Caco-2 (cell line): ENCODE measurements at regions of chrX and their contacts with region 1.

Region 1: DNA sequence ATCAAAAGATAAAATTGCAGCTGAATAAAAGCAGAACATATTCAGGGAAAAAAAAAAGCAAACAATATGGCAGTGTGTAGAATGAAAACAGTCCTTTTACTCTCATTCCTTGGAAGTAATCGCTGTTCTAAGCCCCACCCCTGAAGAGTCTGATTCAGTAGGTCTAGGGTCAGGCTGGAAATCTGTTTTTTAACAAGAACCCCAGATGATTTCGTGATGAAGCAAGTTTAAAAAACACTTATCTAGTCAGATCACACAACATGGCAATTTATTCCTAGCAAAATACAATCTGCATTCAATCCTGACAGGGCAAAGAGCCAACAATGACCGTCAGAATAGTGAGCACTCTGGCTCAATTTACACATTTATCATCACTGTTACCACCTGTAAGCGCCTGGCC is 16.1 kb downstream of the FAM120C start:
- DNase-seq: no peak
- H3K4me3 ChIP-seq: no peak overlapping the region
- H3K4me3 Mint-ChIP-seq: no peak overlapping the region
- H3K27ac Mint-ChIP-seq: no peak overlapping the region
- H3K4me1 ChIP-seq: no peaks in the 10 kb centered on the region
- H3K4me1 Mint-ChIP-seq: no peaks in the 10 kb centered on the region
- H3K27me3 ChIP-seq: no peaks in the 10 kb centered on the region
- H3K27me3 Mint-ChIP-seq: no peaks in the 10 kb centered on the region
- CTCF ChIP-seq: no peak

Region 2: DNA sequence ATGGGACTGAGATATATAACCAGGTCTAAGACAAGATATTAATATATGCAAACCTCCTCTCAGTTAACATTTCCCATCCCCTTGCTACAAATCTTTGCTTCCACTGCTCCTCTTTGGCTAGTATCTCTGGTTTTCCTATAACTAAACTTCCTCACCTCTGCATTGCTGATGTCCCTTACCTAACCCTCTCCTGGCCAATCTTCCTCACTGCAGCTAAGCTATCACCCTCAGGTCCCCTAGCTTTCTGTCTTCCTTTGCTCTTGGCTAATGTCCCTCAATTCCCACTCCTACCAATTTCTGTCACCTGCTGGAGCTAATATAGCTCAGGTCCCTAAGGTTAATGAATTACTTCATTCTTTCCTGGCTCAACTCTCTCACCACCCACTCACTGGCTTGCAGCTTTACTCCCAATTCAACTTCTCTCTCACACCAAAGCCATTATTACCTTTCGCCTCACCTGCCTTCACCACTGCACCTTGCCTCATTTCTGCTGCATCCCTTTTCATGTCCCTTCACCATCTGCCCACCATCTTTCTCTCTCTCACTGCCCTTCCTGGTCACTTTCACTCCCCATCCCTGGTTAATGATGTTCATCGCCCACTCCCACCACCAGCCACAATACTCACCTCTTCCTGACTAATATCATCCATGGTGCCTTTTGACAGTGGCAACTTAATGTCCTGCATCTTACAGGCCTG is 771.2 kb before region 1 on chrX:
- CTCF ChIA-PET with region 1: no interaction called
- POLR2A ChIA-PET with region 1: no interaction called
- intact Hi-C with region 1: loop called (anchors 5 kb)
- DNase-seq: no peak
- H3K4me3 ChIP-seq: no peak overlapping the region
- H3K4me3 Mint-ChIP-seq: no peak overlapping the region
- H3K27ac Mint-ChIP-seq: peak overlapping the region; percentile 1
- H3K4me1 ChIP-seq: no peaks in the 10 kb centered on the region
- H3K4me1 Mint-ChIP-seq: no peaks in the 10 kb centered on the region
- H3K27me3 ChIP-seq: no peaks in the 10 kb centered on the region
- H3K27me3 Mint-ChIP-seq: no peaks in the 10 kb centered on the region
- CTCF ChIP-seq: no peak